ENCODE measurements at regions of chr17 and their contacts with region 1.

Region 1: GRCh38 chr17:2244545-2245525 is 58.8 kb downstream of the SMG6 start:
- DNase-seq: peak; percentile 87 to 92 (median 90)
- H3K4me3 ChIP-seq: no peak overlapping the region
- H3K27ac ChIP-seq: peak overlapping the region in 1 of 2 donors; percentile 51
- H3K4me1 ChIP-seq: peaks cover 10% of the 10 kb centered on the region
- H3K27me3 ChIP-seq: no peaks in the 10 kb centered on the region
- CTCF ChIP-seq: peak; percentile 96 to 99 (median 98)
- EP300 ChIP-seq: no peak
- POLR2A ChIP-seq: peak; percentile 32

Region 2: GRCh38 chr17:2054512-2055291 is 190.1 kb before region 1 on chr17 and contains the start of gene HIC1:
- intact Hi-C with region 1: loop called (anchors 1 to 2 kb)
- DNase-seq: peak; percentile 81 to 90 (median 87)
- H3K4me3 ChIP-seq: peak within 1 kb of the TSS; percentile 41
- H3K27ac ChIP-seq: peak within 1 kb of the TSS; percentile 89 to 98
- H3K4me1 ChIP-seq: peaks cover 8% of the 10 kb centered on the region
- H3K27me3 ChIP-seq: no peaks in the 10 kb centered on the region
- CTCF ChIP-seq: peak; percentile 98 to 99 (median 99)
- EP300 ChIP-seq: no peak
- POLR2A ChIP-seq: peak; percentile 84
- total RNA-seq, gene HIC1: 35.0 to 108 (median 68.0) TPM

Region 3: GRCh38 chr17:2369551-2370210 is 124.8 kb after region 1 on chr17:
- intact Hi-C with region 1: no loop called
- DNase-seq: no peak
- H3K4me3 ChIP-seq: no peak overlapping the region
- H3K27ac ChIP-seq: no peak overlapping the region
- H3K4me1 ChIP-seq: no peaks in the 10 kb centered on the region
- H3K27me3 ChIP-seq: no peaks in the 10 kb centered on the region
- CTCF ChIP-seq: no peak
- EP300 ChIP-seq: no peak
- POLR2A ChIP-seq: no peak

Region 4: DNA sequence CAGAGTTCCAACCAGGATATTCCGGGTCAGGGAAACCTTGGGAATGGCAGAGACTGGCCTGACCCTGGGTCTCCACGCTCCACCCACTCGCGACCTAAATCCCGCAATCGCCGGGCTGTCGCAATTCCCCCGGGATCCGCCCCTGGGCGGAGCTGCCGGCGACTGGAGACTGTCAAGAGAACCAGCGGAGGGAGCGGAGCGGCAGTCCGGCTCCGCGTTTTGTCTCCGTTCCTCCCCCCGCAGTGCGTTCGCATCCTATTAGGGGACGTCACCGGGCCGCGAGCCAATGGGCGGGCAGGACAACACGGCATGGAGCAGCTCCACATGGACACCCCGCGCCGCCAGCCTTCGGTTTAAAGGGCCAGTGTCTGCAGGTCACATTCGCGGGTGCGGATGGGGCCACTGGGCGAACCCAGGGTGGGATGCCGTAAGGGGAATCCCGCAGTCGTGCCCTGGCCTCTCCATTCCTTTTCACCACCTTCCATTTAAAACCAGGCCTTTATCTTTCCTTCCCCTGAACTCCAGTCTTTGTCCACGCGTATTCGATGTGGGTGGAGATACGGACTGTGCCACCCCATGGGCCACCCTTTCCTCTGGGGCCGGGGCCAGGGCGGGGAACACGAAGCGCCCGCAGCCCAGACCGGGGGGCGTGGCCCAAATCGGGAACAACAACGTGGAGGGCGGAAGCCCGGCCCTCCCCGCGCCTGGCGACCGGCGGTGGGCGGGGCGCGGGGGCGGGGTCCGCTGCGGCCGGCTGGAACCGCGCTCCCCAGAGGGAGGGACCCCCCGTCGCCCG is 156.8 kb after region 1 on chr17:
- intact Hi-C with region 1: no loop called
- DNase-seq: peak; percentile 100
- H3K4me3 ChIP-seq: peak overlapping the region; percentile 99
- H3K27ac ChIP-seq: peak overlapping the region; percentile 84 to 99
- H3K4me1 ChIP-seq: peaks cover 20% of the 10 kb centered on the region
- H3K27me3 ChIP-seq: no peaks in the 10 kb centered on the region
- CTCF ChIP-seq: no peak
- EP300 ChIP-seq: peak; percentile 86
- POLR2A ChIP-seq: peak; percentile 60